SK-N-SH (cell line): ENCODE measurements at regions of chr14 and their contacts with region 1.

Region 1: GRCh38 chr14:64960762-64961278 is 11.3 kb downstream of the RAB15 start:
- DNase-seq: peak; percentile 47
- H3K4me3 ChIP-seq: no peak overlapping the region
- H3K27ac ChIP-seq: no peak overlapping the region
- H3K4me1 ChIP-seq: peaks cover 0 to 18% of the 10 kb centered on the region in 2 experiments; a peak in 1 of 4 replicates
- H3K27me3 ChIP-seq: no peaks in the 10 kb centered on the region
- CTCF ChIP-seq: no peak; the same call in 1 of the 2 replicates
- EP300 ChIP-seq: no peak; a peak in 1 of 4 replicates
- RAD21 ChIP-seq: no peak

Region 2: DNA sequence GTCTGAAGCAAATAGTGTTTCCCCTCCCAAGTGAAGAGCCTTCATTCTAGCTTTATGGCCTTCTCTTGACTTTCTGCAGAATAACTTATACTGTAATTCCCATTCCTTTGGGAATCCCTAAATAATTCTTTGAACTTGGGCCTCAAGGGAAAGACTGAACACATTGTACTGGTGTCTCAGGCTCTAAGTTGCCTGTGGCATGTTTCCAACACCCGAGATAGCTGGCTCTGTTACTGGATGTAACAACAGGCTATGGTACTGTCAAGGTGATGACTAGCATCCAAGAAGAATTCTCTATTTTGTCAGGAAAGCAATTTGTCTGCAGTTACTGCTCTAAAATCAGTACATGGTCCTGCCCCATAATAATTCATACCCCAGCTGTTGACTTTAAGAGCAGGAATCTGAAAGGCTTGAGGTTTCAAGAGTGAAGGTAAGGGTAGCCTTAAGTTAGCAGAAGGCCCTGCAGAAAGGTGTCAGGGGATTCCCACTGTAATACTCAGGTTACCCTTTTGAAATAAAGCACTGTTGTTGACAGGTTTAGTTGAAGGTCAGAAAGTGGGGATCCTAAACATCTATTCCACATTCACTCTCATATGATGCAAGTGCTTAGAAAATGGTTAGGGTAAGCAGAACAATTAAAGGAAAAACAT is 23.5 kb before region 1 on chr14:
- CTCF ChIA-PET with region 1: interaction called, 12 read pairs
- POLR2A ChIA-PET with region 1: no interaction called
- DNase-seq: no peak
- H3K4me3 ChIP-seq: no peak overlapping the region
- H3K27ac ChIP-seq: no peak overlapping the region; a peak in 1 of 4 replicates
- H3K4me1 ChIP-seq: no peaks in the 10 kb centered on the region; a peak in 2 of 4 replicates
- H3K27me3 ChIP-seq: no peaks in the 10 kb centered on the region
- CTCF ChIP-seq: no peak
- EP300 ChIP-seq: no peak
- RAD21 ChIP-seq: no peak

Region 3: DNA sequence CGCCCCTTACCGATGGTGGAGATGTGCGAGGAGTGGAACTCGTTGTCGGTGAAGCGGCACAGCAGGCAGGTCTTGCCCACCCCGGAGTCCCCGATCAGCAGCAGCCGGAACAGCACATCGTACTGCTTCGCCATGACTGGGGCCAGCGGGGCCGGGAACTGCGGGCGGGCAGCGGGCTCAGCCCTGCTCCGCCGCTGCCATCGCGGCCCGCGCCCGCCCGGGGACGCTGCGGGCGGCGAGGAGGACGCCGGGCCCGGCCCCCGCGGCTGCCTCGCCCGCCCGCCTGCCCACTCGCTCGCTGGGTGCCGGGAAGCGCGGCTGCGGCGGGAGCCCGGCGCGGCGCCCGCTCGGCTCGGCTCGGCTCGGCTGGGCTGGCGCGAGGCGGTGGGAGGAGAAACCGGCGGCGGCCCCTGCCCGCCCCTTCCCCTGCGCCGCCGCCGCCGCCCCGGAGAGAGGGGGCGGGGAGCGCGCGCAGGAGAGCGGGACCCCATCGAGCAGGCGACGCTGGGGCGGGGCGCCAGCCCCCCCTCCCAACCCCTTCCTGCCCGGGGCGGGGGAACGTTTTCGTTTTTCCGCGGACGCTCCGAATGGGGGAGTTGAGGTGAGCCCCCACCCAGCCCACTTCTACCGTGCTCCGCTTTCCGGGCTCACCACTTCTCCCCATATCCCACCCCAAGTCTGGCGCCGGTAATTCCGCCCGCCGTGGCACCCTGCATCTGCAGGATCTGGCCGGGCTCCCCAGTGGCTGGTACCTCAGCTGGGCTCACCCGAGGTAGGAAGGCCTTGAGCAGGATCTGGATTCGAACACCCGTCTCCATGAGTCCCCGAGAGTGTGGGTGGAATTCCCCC is 11.3 kb after region 1 on chr14 and contains the start of gene RAB15:
- CTCF ChIA-PET with region 1: interaction called, 10 read pairs
- POLR2A ChIA-PET with region 1: interaction called, 4 read pairs
- DNase-seq: peak; percentile 90
- H3K4me3 ChIP-seq: peak within 1 kb of the TSS; percentile 59 to 69
- H3K27ac ChIP-seq: peak within 1 kb of the TSS in 1 of 2 experiments; percentile 35; a peak in 1 of 4 replicates
- H3K4me1 ChIP-seq: peaks cover 10 to 19% of the 10 kb centered on the region in 2 experiments; a peak in 3 of 4 replicates
- H3K27me3 ChIP-seq: no peaks in the 10 kb centered on the region
- CTCF ChIP-seq: no peak
- EP300 ChIP-seq: no peak
- RAD21 ChIP-seq: no peak
- polyA plus RNA-seq, gene RAB15: 14.2 and 14.8 TPM in 2 replicates

Region 4: DNA sequence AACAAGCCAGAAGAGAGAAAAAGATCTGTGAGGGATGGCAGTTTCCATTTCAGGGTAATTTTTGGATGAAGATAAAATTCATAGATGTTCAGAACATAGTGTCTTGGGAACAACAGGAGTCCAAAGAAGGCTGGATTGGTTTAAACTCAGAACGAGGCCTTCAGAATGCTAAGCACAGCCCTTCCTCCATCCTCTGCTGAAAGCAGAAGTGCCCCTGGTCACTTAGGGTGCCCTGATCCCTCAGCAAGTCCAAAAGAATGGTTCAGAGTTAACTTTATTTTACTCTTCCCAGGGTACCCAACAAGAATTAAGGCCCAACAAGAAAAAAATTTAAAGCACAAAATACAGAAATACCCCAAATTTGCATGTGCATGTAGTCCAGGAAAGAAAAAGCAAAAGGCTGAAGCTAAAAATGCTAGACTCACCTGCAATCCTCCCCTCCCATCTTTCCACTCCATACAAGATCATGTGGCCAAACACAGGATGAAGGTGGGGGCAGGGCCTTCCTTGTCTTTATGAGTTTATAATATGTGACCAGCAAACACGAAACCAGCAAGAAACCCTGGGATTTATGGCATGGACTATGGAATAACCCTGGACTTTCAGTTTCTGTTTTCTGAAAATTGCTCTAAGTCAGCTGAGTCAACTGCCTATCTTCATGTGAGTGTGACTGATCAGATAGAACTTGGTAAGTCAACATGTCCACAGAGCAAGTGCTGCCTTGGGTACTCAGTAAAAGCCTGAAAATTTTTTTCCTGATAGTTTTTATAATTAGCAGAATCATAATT is 120.3 kb after region 1 on chr14:
- CTCF ChIA-PET with region 1: no interaction called
- POLR2A ChIA-PET with region 1: no interaction called
- DNase-seq: no peak
- H3K4me3 ChIP-seq: no peak overlapping the region
- H3K27ac ChIP-seq: no peak overlapping the region
- H3K4me1 ChIP-seq: peaks cover 0 to 2% of the 10 kb centered on the region in 2 experiments; a peak in 2 of 4 replicates
- H3K27me3 ChIP-seq: no peaks in the 10 kb centered on the region
- CTCF ChIP-seq: no peak
- EP300 ChIP-seq: no peak
- RAD21 ChIP-seq: no peak